AG04449 (cell line): ENCODE measurements at regions of chr19 and their contacts with region 1.

Region 1: DNA sequence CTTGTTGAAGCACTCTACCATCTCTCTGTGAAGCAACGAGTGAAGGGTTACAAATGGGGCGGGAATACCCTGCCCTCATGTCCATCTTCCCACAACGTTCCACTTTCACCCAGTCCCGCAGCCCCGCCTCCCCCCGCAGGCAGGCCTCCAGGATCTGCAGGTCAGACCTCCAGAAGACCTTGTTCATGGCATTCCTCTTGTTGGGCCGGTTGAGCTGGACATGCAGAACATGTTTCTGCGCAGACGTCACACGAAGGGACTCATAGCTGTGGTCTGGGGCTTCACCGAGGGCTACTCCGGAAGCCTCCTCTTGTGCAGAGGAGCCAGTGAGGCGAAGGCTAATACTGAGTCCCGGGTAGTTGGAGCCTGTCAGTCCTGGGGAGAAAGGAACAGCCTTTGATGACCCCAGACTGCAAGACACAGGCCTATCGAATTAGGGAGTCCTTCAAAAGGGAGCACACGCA is 420 bp downstream of the ECH1 start:
- DNase-seq: peak; percentile 77
- H3K4me3 ChIP-seq: peak overlapping the region; percentile 81
- CTCF ChIP-seq: no peak

Region 2: GRCh38 chr19:38849860-38850435 is 18.8 kb after region 1 on chr19 and contains the start of gene HNRNPL:
- CTCF ChIA-PET with region 1: interaction called, 3 read pairs
- POLR2A ChIA-PET with region 1: interaction called, 10 read pairs
- DNase-seq: no peak
- H3K4me3 ChIP-seq: peak within 1 kb of the TSS; percentile 77
- CTCF ChIP-seq: peak; percentile 91

Region 3: GRCh38 chr19:38964738-38965137 is 133.6 kb after region 1 on chr19:
- CTCF ChIA-PET with region 1: no interaction called
- POLR2A ChIA-PET with region 1: no interaction called
- DNase-seq: no peak
- H3K4me3 ChIP-seq: no peak overlapping the region
- CTCF ChIP-seq: no peak